GM10248 (cell line): ENCODE measurements at regions of chr11 and their contacts with region 1.

Region 1: GRCh38 chr11:77411717-77412441 is 62.0 kb downstream of the PAK1 start:
- DNase-seq: peak; percentile 83
- CTCF ChIP-seq: peak; percentile 32

Region 2: GRCh38 chr11:77425346-77425745 is 13.5 kb after region 1 on chr11:
- CTCF ChIA-PET with region 1: interaction called, 18 read pairs
- POLR2A ChIA-PET with region 1: no interaction called
- DNase-seq: no peak
- CTCF ChIP-seq: no peak